WTC11 (cell line): ENCODE measurements at regions of chr14 and their contacts with region 1.

Region 1: DNA sequence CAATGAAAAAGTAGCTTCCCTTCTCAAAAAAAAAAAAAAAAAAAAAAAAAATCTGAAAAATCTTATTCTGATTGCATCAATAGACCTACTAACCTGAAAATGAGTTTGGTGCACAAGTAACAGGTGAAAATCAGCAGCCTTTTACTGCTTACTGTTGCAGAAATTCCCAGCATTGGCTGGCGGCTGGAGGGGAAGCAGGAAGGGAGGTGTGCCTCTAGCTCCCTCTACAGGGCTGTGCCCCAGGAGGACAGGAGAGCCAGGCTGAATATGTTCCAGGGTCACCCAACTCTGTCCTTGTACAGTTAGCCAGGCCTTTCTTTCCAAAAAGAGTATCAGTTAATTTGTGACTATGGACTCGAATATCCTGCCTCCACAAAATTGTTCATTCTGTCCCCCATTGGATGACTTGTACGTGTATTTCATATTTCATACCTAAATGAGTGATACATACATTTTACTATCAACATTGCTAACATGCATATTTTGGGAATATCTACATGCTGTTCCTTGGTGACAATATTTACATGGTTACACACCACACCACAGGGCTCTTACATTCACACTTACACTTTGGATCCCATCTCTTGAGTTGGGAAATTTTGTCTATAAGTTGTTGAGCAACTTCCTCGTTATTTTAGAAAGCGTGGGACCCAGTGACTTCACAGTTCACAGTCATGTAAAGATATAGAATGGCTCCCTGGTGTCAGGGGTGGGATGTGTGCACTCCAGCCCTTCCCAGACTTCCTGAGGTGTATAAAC is 124.8 kb downstream of the SAMD4A start:
- DNase-seq: peak; percentile 84
- ATAC-seq: peak; percentile 96
- H3K4me3 Mint-ChIP-seq: no peak overlapping the region
- H3K27ac Mint-ChIP-seq: no peak overlapping the region
- H3K4me1 Mint-ChIP-seq: peaks cover 7% of the 10 kb centered on the region
- H3K27me3 Mint-ChIP-seq: no peaks in the 10 kb centered on the region
- CTCF ChIP-seq: peak; percentile 58

Region 2: GRCh38 chr14:54585214-54585613 is 106.5 kb before region 1 on chr14:
- CTCF ChIA-PET with region 1: no interaction called
- POLR2A ChIA-PET with region 1: no interaction called
- DNase-seq: no peak
- ATAC-seq: no peak
- H3K4me3 Mint-ChIP-seq: no peak overlapping the region
- H3K27ac Mint-ChIP-seq: no peak overlapping the region
- H3K4me1 Mint-ChIP-seq: no peaks in the 10 kb centered on the region
- H3K27me3 Mint-ChIP-seq: no peaks in the 10 kb centered on the region
- CTCF ChIP-seq: no peak

Region 3: GRCh38 chr14:54642801-54643697 is 48.7 kb before region 1 on chr14:
- CTCF ChIA-PET with region 1: interaction called, 13 read pairs
- POLR2A ChIA-PET with region 1: no interaction called
- DNase-seq: no peak
- ATAC-seq: peak; percentile 73
- H3K4me3 Mint-ChIP-seq: no peak overlapping the region
- H3K27ac Mint-ChIP-seq: no peak overlapping the region
- H3K4me1 Mint-ChIP-seq: peaks cover 19% of the 10 kb centered on the region
- H3K27me3 Mint-ChIP-seq: no peaks in the 10 kb centered on the region
- CTCF ChIP-seq: no peak

Region 4: GRCh38 chr14:54673193-54674045 is 18.3 kb before region 1 on chr14:
- CTCF ChIA-PET with region 1: interaction called, 15 read pairs
- POLR2A ChIA-PET with region 1: interaction called, 3 read pairs
- DNase-seq: no peak
- ATAC-seq: peak; percentile 72
- H3K4me3 Mint-ChIP-seq: 0 out of 2 replicates have a peak overlapping the region, but pooled peaks have one; percentile 16
- H3K27ac Mint-ChIP-seq: peak overlapping the region; percentile 92
- H3K4me1 Mint-ChIP-seq: peaks cover 79% of the 10 kb centered on the region
- H3K27me3 Mint-ChIP-seq: no peaks in the 10 kb centered on the region
- CTCF ChIP-seq: no peak

Region 5: GRCh38 chr14:54722781-54723432 is 31.2 kb after region 1 on chr14:
- CTCF ChIA-PET with region 1: interaction called, 13 read pairs
- POLR2A ChIA-PET with region 1: interaction called, 3 read pairs
- DNase-seq: no peak
- ATAC-seq: peak; percentile 77
- H3K4me3 Mint-ChIP-seq: no peak overlapping the region
- H3K27ac Mint-ChIP-seq: no peak overlapping the region
- H3K4me1 Mint-ChIP-seq: peaks cover 8% of the 10 kb centered on the region
- H3K27me3 Mint-ChIP-seq: no peaks in the 10 kb centered on the region
- CTCF ChIP-seq: no peak